ENCODE measurements at regions of chr3 and their contacts with region 1.

Region 1: GRCh38 chr3:137110484-137110883 is 152.7 kb downstream of the IL20RB start:
- DNase-seq: no peak
- H3K4me3 ChIP-seq: no peak overlapping the region
- H3K27ac ChIP-seq: no peak overlapping the region
- H3K4me1 ChIP-seq: peaks cover 3 to 12% (median 7%) of the 10 kb centered on the region in 4 experiments; a peak in 5 of 7 replicates
- H3K27me3 ChIP-seq: peaks cover 0 to 3% (median 0%) of the 10 kb centered on the region in 4 experiments; a peak in 1 of 7 replicates
- CTCF ChIP-seq: peak in 2 of 3 experiments; percentile 56 to 71; a peak in 3 of 4 replicates
- EP300 ChIP-seq: no peak
- POLR2A ChIP-seq: no peak
- RAD21 ChIP-seq: peak; percentile 76 to 80

Region 2: GRCh38 chr3:136984837-136985236 is 125.6 kb before region 1 on chr3:
- CTCF ChIA-PET with region 1: no interaction called
- POLR2A ChIA-PET with region 1: no interaction called
- DNase-seq: no peak
- H3K4me3 ChIP-seq: no peak overlapping the region
- H3K27ac ChIP-seq: no peak overlapping the region
- H3K4me1 ChIP-seq: no peaks in the 10 kb centered on the region
- H3K27me3 ChIP-seq: no peaks in the 10 kb centered on the region
- CTCF ChIP-seq: no peak
- EP300 ChIP-seq: no peak
- POLR2A ChIP-seq: no peak
- RAD21 ChIP-seq: no peak

Region 3: DNA sequence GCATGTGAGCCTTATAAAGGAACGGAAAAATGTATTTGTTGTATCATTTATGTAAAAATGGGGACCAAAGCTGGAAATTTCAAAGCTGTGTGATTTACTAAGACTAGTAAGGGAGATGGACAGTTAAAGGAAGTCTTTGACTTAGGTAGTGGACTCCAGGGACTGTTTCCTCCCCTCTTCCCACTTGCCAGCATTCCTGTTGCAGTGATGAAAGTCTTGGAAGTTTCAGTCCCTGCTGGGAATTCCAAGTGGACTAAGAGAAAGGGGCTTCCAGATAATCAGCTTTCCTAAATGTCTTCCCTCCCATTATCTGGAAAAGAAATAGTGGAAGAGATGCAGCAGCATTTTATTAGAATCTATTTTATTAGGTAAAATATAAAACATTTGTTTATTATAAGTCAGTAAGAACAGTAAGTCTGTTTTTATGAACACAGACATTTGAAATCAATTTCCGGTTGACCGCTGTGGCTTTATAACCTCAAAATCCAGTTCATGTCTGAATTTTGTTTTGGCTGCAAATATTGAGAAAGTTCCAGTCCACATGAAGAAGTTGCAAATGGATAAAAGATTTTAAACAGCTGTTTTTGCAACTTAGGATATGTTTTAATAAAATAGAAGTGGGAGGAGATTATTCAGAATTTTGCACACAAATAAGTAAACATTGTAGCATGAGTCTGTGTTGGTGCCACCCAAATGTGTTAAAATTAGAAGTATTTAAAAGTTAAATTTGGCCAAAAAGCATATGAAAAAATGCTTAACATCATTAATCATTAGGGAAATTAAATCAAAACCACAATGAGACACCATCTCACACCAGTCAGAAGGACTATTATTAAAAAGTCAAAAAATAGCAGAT is 10.9 kb before region 1 on chr3:
- CTCF ChIA-PET with region 1: interaction called, 33 read pairs
- POLR2A ChIA-PET with region 1: no interaction called
- DNase-seq: no peak
- H3K4me3 ChIP-seq: no peak overlapping the region
- H3K27ac ChIP-seq: no peak overlapping the region
- H3K4me1 ChIP-seq: peaks cover 0 to 3% (median 1%) of the 10 kb centered on the region in 4 experiments; a peak in 5 of 7 replicates
- H3K27me3 ChIP-seq: no peaks in the 10 kb centered on the region
- CTCF ChIP-seq: no peak
- EP300 ChIP-seq: no peak
- POLR2A ChIP-seq: no peak
- RAD21 ChIP-seq: no peak

Region 4: GRCh38 chr3:137131081-137131480 is 20.6 kb after region 1 on chr3:
- CTCF ChIA-PET with region 1: interaction called, 19 read pairs
- POLR2A ChIA-PET with region 1: no interaction called
- DNase-seq: no peak
- H3K4me3 ChIP-seq: no peak overlapping the region
- H3K27ac ChIP-seq: no peak overlapping the region
- H3K4me1 ChIP-seq: peaks cover 0 to 3% (median 3%) of the 10 kb centered on the region in 4 experiments; a peak in 2 of 7 replicates
- H3K27me3 ChIP-seq: no peaks in the 10 kb centered on the region
- CTCF ChIP-seq: no peak
- EP300 ChIP-seq: no peak
- POLR2A ChIP-seq: no peak
- RAD21 ChIP-seq: no peak

Region 5: GRCh38 chr3:137163241-137163871 is 52.9 kb after region 1 on chr3:
- CTCF ChIA-PET with region 1: interaction called, 33 read pairs
- POLR2A ChIA-PET with region 1: no interaction called
- DNase-seq: no peak
- H3K4me3 ChIP-seq: no peak overlapping the region
- H3K27ac ChIP-seq: no peak overlapping the region
- H3K4me1 ChIP-seq: peaks cover 0 to 12% (median 7%) of the 10 kb centered on the region in 4 experiments; a peak in 3 of 7 replicates
- H3K27me3 ChIP-seq: no peaks in the 10 kb centered on the region
- CTCF ChIP-seq: no peak
- EP300 ChIP-seq: no peak
- POLR2A ChIP-seq: no peak
- RAD21 ChIP-seq: no peak

Region 6: DNA sequence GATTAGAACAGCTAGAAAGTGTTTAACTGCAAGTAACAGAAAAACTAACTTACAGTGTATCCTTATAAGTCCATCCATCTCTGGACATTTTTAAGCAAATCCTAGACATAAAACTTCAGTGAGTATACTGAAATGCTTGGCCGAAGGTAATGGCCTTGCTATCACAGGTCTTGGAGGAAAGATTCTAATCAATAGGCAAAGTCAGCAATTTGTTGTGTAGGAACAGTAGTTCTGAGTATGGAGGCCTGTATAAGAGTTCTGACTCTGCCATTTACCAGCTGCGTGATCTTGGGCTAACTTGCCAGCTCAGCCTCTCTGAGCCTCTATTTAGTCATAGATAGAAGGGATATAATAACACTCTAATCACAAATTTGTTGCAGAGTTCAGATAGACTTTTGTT is 175.4 kb after region 1 on chr3:
- CTCF ChIA-PET with region 1: interaction called, 10 read pairs
- POLR2A ChIA-PET with region 1: no interaction called
- DNase-seq: no peak
- H3K4me3 ChIP-seq: no peak overlapping the region
- H3K27ac ChIP-seq: no peak overlapping the region
- H3K4me1 ChIP-seq: no peaks in the 10 kb centered on the region; a peak in 1 of 7 replicates
- H3K27me3 ChIP-seq: no peaks in the 10 kb centered on the region
- CTCF ChIP-seq: no peak
- EP300 ChIP-seq: no peak
- POLR2A ChIP-seq: no peak
- RAD21 ChIP-seq: no peak

Region 7: GRCh38 chr3:137946345-137946973 is 836.0 kb after region 1 on chr3:
- CTCF ChIA-PET with region 1: interaction called, 15 read pairs
- POLR2A ChIA-PET with region 1: no interaction called
- DNase-seq: peak; percentile 41 to 67
- H3K4me3 ChIP-seq: no peak overlapping the region
- H3K27ac ChIP-seq: no peak overlapping the region
- H3K4me1 ChIP-seq: peaks cover 0 to 10% (median 0%) of the 10 kb centered on the region in 4 experiments; a peak in 1 of 7 replicates
- H3K27me3 ChIP-seq: peaks cover 0 to 5% (median under 1%) of the 10 kb centered on the region in 4 experiments; a peak in 4 of 7 replicates
- CTCF ChIP-seq: peak; percentile 31 to 79 (median 73)
- EP300 ChIP-seq: no peak
- POLR2A ChIP-seq: no peak
- RAD21 ChIP-seq: peak; percentile 97 to 98